H1 (cell line): ENCODE measurements at regions of chr7 and their contacts with region 1.

Region 1: GRCh38 chr7:120792091-120792860 is 65.7 kb downstream of the TSPAN12 start:
- DNase-seq: peak; percentile 67 to 91
- H3K4me3 ChIP-seq: no peak overlapping the region
- H3K27ac ChIP-seq: no peak overlapping the region
- H3K4me1 ChIP-seq: peaks cover 0 to 4% (median 0%) of the 10 kb centered on the region in 4 experiments; a peak in 1 of 7 replicates
- H3K27me3 ChIP-seq: no peaks in the 10 kb centered on the region
- CTCF ChIP-seq: peak; percentile 92 to 97 (median 95)
- EP300 ChIP-seq: no peak
- POLR2A ChIP-seq: no peak
- RAD21 ChIP-seq: peak; percentile 71 to 84

Region 2: DNA sequence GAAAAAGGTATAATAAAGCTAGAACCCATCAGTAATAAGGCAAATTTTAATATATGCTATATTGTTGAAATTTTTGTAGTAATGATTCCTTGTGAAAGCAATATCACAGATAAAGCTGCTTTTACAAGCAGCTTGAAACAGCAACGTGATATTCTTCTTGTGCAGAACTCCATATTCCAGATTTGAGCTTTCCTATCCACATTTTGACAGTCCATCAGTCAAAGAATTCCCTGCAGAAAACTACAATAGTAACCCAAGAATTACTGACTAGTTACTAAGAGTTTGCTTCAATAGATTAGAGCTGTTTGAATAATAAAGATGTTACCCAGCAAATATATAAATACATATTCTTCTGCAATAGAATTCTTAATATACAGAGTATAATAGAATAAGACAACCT is 228.1 kb before region 1 on chr7:
- CTCF ChIA-PET with region 1: no interaction called
- POLR2A ChIA-PET with region 1: no interaction called
- DNase-seq: no peak
- H3K4me3 ChIP-seq: no peak overlapping the region
- H3K27ac ChIP-seq: no peak overlapping the region
- H3K4me1 ChIP-seq: no peaks in the 10 kb centered on the region; a peak in 1 of 7 replicates
- H3K27me3 ChIP-seq: no peaks in the 10 kb centered on the region
- CTCF ChIP-seq: no peak
- EP300 ChIP-seq: no peak
- POLR2A ChIP-seq: no peak
- RAD21 ChIP-seq: no peak

Region 3: GRCh38 chr7:120805636-120806388 is 13.5 kb after region 1 on chr7:
- CTCF ChIA-PET with region 1: interaction called, 28 read pairs
- POLR2A ChIA-PET with region 1: interaction called, 3 read pairs
- DNase-seq: peak; percentile 31 to 80
- H3K4me3 ChIP-seq: no peak overlapping the region
- H3K27ac ChIP-seq: no peak overlapping the region
- H3K4me1 ChIP-seq: no peaks in the 10 kb centered on the region
- H3K27me3 ChIP-seq: no peaks in the 10 kb centered on the region
- CTCF ChIP-seq: peak in 2 of 3 experiments; percentile 68 to 79; a peak in 3 of 4 replicates
- EP300 ChIP-seq: no peak
- POLR2A ChIP-seq: no peak
- RAD21 ChIP-seq: peak; percentile 79 to 84

Region 4: DNA sequence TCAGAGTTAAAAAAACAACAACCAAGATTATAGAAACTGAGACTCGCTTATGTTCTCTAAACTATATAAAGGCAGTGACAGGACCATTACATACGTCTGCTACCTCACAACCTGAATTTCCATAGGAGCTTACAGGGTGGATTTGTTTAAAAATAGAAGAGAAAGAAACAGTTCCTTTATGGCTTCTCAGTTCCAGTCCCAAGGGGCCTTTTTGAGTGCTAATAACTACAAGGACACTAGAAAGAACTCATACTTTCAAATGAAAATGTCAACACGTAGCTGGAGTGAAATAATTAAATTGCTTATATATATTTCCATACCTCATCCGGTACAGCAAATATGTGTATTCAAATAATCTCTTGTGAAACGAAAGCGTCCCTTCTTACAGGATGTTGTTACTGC is 46.0 kb after region 1 on chr7:
- CTCF ChIA-PET with region 1: no interaction called
- POLR2A ChIA-PET with region 1: no interaction called
- DNase-seq: no peak
- H3K4me3 ChIP-seq: no peak overlapping the region
- H3K27ac ChIP-seq: no peak overlapping the region
- H3K4me1 ChIP-seq: peaks cover 0 to 17% (median 9%) of the 10 kb centered on the region in 4 experiments; a peak in 4 of 7 replicates
- H3K27me3 ChIP-seq: no peaks in the 10 kb centered on the region
- CTCF ChIP-seq: no peak
- EP300 ChIP-seq: no peak
- POLR2A ChIP-seq: no peak
- RAD21 ChIP-seq: no peak

Region 5: GRCh38 chr7:120941064-120941463 is 148.8 kb after region 1 on chr7:
- CTCF ChIA-PET with region 1: interaction called, 13 read pairs
- POLR2A ChIA-PET with region 1: no interaction called
- DNase-seq: no peak
- H3K4me3 ChIP-seq: no peak overlapping the region
- H3K27ac ChIP-seq: no peak overlapping the region
- H3K4me1 ChIP-seq: no peaks in the 10 kb centered on the region
- H3K27me3 ChIP-seq: no peaks in the 10 kb centered on the region
- CTCF ChIP-seq: peak in 1 of 3 experiments; percentile 12; a peak in 1 of 4 replicates
- EP300 ChIP-seq: no peak
- POLR2A ChIP-seq: no peak
- RAD21 ChIP-seq: peak in 1 of 2 experiments; percentile 31; a peak in 3 of 4 replicates

Region 6: DNA sequence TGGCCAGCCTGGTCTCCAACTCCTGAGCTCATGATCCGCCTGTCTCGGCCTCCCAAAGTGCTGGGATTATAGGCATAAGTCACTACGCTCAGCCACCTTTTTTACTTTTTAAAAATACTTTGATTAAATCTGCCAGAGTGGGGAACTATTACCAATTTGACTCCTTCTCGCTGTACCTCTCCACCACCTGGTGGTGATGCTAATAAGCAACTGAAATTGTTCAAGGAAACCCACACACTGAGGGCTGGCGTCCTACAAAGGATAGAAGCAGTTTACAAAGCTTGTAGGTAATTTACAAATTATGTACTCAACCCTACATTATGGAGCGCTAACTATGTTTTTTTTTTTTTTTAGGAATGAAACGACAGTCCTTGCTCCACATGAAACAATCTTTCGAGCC is 307.3 kb after region 1 on chr7:
- CTCF ChIA-PET with region 1: interaction called, 10 read pairs
- POLR2A ChIA-PET with region 1: no interaction called
- DNase-seq: no peak
- H3K4me3 ChIP-seq: no peak overlapping the region
- H3K27ac ChIP-seq: no peak overlapping the region
- H3K4me1 ChIP-seq: peaks cover 3 to 18% (median 6%) of the 10 kb centered on the region in 4 experiments; a peak in 5 of 7 replicates
- H3K27me3 ChIP-seq: no peaks in the 10 kb centered on the region
- CTCF ChIP-seq: peak in 2 of 3 experiments; percentile 44 to 46; a peak in 2 of 4 replicates
- EP300 ChIP-seq: no peak
- POLR2A ChIP-seq: no peak
- RAD21 ChIP-seq: peak; percentile 59 to 69

Region 7: DNA sequence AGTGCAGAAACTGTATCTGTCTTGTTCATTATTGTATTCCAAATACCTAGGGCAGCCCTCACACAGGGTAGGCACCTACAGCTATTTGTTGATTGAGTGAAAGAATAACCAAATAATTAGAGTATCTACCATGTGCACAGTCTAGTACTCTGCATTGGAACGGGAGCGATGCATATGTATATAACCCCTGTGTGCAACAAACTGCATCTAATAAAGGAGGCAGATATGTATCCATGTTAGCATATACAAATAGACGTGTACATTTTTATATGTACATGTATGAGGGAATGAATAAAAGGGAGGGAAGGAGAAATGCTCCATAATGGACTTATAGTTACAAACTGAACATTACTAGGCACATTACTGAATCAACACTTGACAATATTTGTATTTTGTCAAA is 889.4 kb after region 1 on chr7:
- CTCF ChIA-PET with region 1: no interaction called
- POLR2A ChIA-PET with region 1: no interaction called
- DNase-seq: no peak
- H3K4me3 ChIP-seq: no peak overlapping the region
- H3K27ac ChIP-seq: no peak overlapping the region
- H3K4me1 ChIP-seq: peaks cover 0 to 5% (median 3%) of the 10 kb centered on the region in 4 experiments; a peak in 4 of 7 replicates
- H3K27me3 ChIP-seq: no peaks in the 10 kb centered on the region
- CTCF ChIP-seq: no peak
- EP300 ChIP-seq: no peak
- POLR2A ChIP-seq: no peak
- RAD21 ChIP-seq: no peak